Right cardiac atrium (tissue), 5 donors: ENCODE measurements at regions of chr2 and their contacts with region 1.

Region 1: GRCh38 chr2:233251306-233252116 is at the start of gene ATG16L1:
- DNase-seq: peak; percentile 97 to 99 (median 99)
- ATAC-seq: peak; percentile 98 to 99
- H3K4me3 ChIP-seq: peak within 1 kb of the TSS; percentile 91
- H3K27ac ChIP-seq: peak within 1 kb of the TSS; percentile 46
- H3K4me1 ChIP-seq: no peaks in the 10 kb centered on the region
- H3K27me3 ChIP-seq: no peaks in the 10 kb centered on the region
- total RNA-seq, gene ATG16L1: 16.2 to 18.8 (median 17.9) TPM

Region 2: DNA sequence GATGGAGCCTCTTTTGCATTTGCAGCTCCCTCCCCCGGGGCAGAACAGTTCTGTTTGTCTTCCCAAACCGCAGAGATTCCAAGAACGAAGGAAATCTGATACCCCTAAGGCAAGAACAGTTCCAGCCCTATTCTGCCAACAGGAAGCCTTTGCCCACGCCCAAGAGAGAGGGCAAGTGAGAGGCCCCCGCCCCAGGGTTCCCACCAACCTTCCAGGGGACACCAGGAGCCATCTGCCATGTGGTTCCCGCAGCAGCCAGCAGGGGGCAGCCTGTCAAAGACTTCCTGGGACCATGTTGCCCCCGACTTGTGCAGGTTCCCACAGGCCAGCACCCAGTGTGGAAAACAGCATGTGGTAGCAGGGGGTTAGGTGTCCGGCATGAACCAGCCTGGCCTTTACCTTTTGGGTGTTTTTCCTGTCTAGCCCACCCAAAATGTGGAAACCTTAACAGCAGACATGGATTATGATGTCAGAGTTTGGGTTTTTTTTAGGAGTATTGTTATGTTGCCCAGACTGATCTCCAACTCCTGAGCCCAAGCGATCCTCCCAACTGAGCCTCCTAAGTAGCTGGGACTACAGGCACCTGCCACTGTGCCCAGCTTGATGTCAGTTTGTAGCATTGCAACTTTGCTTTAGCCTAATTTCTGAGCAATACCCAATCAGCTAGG is 639.8 kb before region 1 on chr2:
- intact Hi-C with region 1: loop called in 1 of 4 experiments (anchors 10 kb)
- DNase-seq: peak; percentile 58 to 86 (median 84)
- ATAC-seq: peak; percentile 33 to 65
- H3K4me3 ChIP-seq: no peak overlapping the region
- H3K27ac ChIP-seq: no peak overlapping the region
- H3K4me1 ChIP-seq: no peaks in the 10 kb centered on the region
- H3K27me3 ChIP-seq: no peaks in the 10 kb centered on the region

Region 3: GRCh38 chr2:232854082-232854481 is 397.4 kb before region 1 on chr2:
- intact Hi-C with region 1: loop called in 3 of 4 experiments (anchors 5 to 10 kb)
- DNase-seq: peak in 1 of 3 donors; percentile 51
- ATAC-seq: peak in 1 of 2 donors; percentile 69
- H3K4me3 ChIP-seq: no peak overlapping the region
- H3K27ac ChIP-seq: no peak overlapping the region
- H3K4me1 ChIP-seq: peaks cover 1% of the 10 kb centered on the region
- H3K27me3 ChIP-seq: no peaks in the 10 kb centered on the region

Region 4: GRCh38 chr2:232876078-232876977 is 375.2 kb before region 1 on chr2:
- intact Hi-C with region 1: loop called in 1 of 4 experiments (anchors 10 kb)
- DNase-seq: no peak
- ATAC-seq: peak in 1 of 2 donors; percentile 17
- H3K4me3 ChIP-seq: peak overlapping the region; percentile 45
- H3K27ac ChIP-seq: no peak overlapping the region
- H3K4me1 ChIP-seq: no peaks in the 10 kb centered on the region
- H3K27me3 ChIP-seq: no peaks in the 10 kb centered on the region

Region 5: GRCh38 chr2:233100192-233100998 is 151.1 kb before region 1 on chr2:
- intact Hi-C with region 1: loop called in 3 of 4 experiments (anchors 2 to 10 kb)
- DNase-seq: no peak
- ATAC-seq: no peak
- H3K4me3 ChIP-seq: no peak overlapping the region
- H3K27ac ChIP-seq: no peak overlapping the region
- H3K4me1 ChIP-seq: no peaks in the 10 kb centered on the region
- H3K27me3 ChIP-seq: no peaks in the 10 kb centered on the region

Region 6: GRCh38 chr2:233288719-233289118 is 37.2 kb after region 1 on chr2:
- intact Hi-C with region 1: no loop called
- DNase-seq: no peak
- ATAC-seq: no peak
- H3K4me3 ChIP-seq: no peak overlapping the region
- H3K27ac ChIP-seq: no peak overlapping the region
- H3K4me1 ChIP-seq: no peaks in the 10 kb centered on the region
- H3K27me3 ChIP-seq: no peaks in the 10 kb centered on the region

Region 7: GRCh38 chr2:233323851-233324250 is 72.3 kb after region 1 on chr2:
- intact Hi-C with region 1: no loop called
- DNase-seq: no peak
- ATAC-seq: no peak
- H3K4me3 ChIP-seq: no peak overlapping the region
- H3K27ac ChIP-seq: no peak overlapping the region
- H3K4me1 ChIP-seq: no peaks in the 10 kb centered on the region
- H3K27me3 ChIP-seq: no peaks in the 10 kb centered on the region